Activated CD4-positive, alpha-beta T cell treated with anti-CD3 and anti-CD28 coated beads for 36 hours (primary cell): ENCODE measurements at regions of chr1 and their contacts with region 1.

Region 1: GRCh38 chr1:204975570-204976235 is 67.3 kb upstream of the CNTN2 start:
- DNase-seq: peak; percentile 74
- ATAC-seq: peak; percentile 85
- H3K4me3 Mint-ChIP-seq: no peak overlapping the region
- H3K27ac Mint-ChIP-seq: no peak overlapping the region
- H3K4me1 Mint-ChIP-seq: peaks cover 2% of the 10 kb centered on the region
- H3K27me3 Mint-ChIP-seq: peaks cover 2% of the 10 kb centered on the region

Region 2: GRCh38 chr1:204950353-204951001 is 25.2 kb before region 1 on chr1:
- CTCF ChIA-PET with region 1: no interaction called
- POLR2A ChIA-PET with region 1: no interaction called
- intact Hi-C with region 1: no loop called
- DNase-seq: no peak
- ATAC-seq: no peak
- H3K4me3 Mint-ChIP-seq: no peak overlapping the region
- H3K27ac Mint-ChIP-seq: no peak overlapping the region
- H3K4me1 Mint-ChIP-seq: no peaks in the 10 kb centered on the region
- H3K27me3 Mint-ChIP-seq: peaks cover 9% of the 10 kb centered on the region

Region 3: GRCh38 chr1:204989266-204990058 is 13.8 kb after region 1 on chr1:
- CTCF ChIA-PET with region 1: interaction called, 42 read pairs
- POLR2A ChIA-PET with region 1: interaction called, 3 read pairs
- intact Hi-C with region 1: no loop called
- DNase-seq: peak; percentile 82
- ATAC-seq: peak; percentile 89
- H3K4me3 Mint-ChIP-seq: no peak overlapping the region
- H3K27ac Mint-ChIP-seq: no peak overlapping the region
- H3K4me1 Mint-ChIP-seq: peaks cover 11% of the 10 kb centered on the region
- H3K27me3 Mint-ChIP-seq: peaks cover 5% of the 10 kb centered on the region